ENCODE measurements at regions of chr6 and their contacts with region 1.

Region 1: GRCh38 chr6:130322673-130323268 is 43.0 kb upstream of the TMEM200A start:
- DNase-seq: peak; percentile 60
- H3K4me3 ChIP-seq: no peak overlapping the region
- H3K27ac ChIP-seq: no peak overlapping the region
- H3K4me1 ChIP-seq: peaks cover 2% of the 10 kb centered on the region
- H3K27me3 ChIP-seq: no peaks in the 10 kb centered on the region
- CTCF ChIP-seq: peak; percentile 71 to 83 (median 78)
- POLR2A ChIP-seq: no peak

Region 2: GRCh38 chr6:130240232-130240631 is 82.5 kb before region 1 on chr6:
- intact Hi-C with region 1: no loop called
- DNase-seq: no peak
- H3K4me3 ChIP-seq: no peak overlapping the region
- H3K27ac ChIP-seq: no peak overlapping the region
- H3K4me1 ChIP-seq: no peaks in the 10 kb centered on the region
- H3K27me3 ChIP-seq: no peaks in the 10 kb centered on the region
- CTCF ChIP-seq: no peak
- POLR2A ChIP-seq: no peak

Region 3: GRCh38 chr6:130259557-130259956 is 63.2 kb before region 1 on chr6:
- intact Hi-C with region 1: no loop called
- DNase-seq: no peak
- H3K4me3 ChIP-seq: no peak overlapping the region
- H3K27ac ChIP-seq: no peak overlapping the region
- H3K4me1 ChIP-seq: no peaks in the 10 kb centered on the region
- H3K27me3 ChIP-seq: no peaks in the 10 kb centered on the region
- CTCF ChIP-seq: no peak
- POLR2A ChIP-seq: no peak

Region 4: GRCh38 chr6:130417951-130418350 is 95.2 kb after region 1 on chr6:
- intact Hi-C with region 1: no loop called
- DNase-seq: no peak
- H3K4me3 ChIP-seq: no peak overlapping the region
- H3K27ac ChIP-seq: no peak overlapping the region
- H3K4me1 ChIP-seq: no peaks in the 10 kb centered on the region
- H3K27me3 ChIP-seq: no peaks in the 10 kb centered on the region
- CTCF ChIP-seq: no peak
- POLR2A ChIP-seq: no peak

Region 5: DNA sequence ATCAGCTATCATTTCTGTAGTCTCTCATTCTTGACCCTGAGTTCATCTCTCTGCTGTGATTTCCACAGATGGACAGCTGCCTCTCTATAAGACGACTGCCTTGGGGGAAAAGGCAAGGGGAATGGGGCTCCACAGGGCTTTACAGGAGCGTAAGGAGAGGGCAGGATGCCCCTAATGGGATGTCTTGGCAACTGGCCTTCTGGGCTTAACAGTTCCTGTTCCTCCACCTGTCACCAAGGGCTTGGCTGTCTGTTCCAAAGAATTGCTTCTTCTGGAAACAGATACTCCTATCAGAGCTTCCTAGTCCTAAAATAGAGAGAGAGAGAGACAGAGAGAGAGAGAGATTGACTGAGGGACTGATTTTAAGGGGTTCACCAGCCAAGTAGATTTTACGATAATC is 225.0 kb after region 1 on chr6:
- intact Hi-C with region 1: no loop called
- DNase-seq: no peak
- H3K4me3 ChIP-seq: no peak overlapping the region
- H3K27ac ChIP-seq: no peak overlapping the region
- H3K4me1 ChIP-seq: no peaks in the 10 kb centered on the region
- H3K27me3 ChIP-seq: no peaks in the 10 kb centered on the region
- CTCF ChIP-seq: no peak
- POLR2A ChIP-seq: no peak

Region 6: DNA sequence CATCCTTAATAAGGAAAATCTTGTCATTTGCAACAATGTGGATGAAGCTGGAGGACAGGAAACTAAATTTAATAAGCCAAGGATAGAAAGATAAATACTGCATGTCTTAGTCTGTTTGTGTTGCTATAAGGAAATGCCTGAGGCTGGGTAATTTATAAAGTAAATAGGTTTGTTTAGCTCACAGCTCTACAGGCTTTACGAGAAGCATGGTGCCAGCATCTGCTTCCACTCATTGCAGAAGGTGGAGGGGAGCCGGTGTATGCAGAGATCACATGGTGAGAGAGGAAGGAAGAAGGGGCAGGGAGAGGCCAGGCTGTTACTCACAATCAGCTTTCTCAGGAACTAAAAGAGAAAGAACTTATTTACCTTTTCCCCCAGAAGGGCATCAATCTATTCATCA is 385.6 kb after region 1 on chr6:
- intact Hi-C with region 1: loop called (anchors 10 kb)
- DNase-seq: no peak
- H3K4me3 ChIP-seq: no peak overlapping the region
- H3K27ac ChIP-seq: no peak overlapping the region
- H3K4me1 ChIP-seq: no peaks in the 10 kb centered on the region
- H3K27me3 ChIP-seq: no peaks in the 10 kb centered on the region
- CTCF ChIP-seq: no peak
- POLR2A ChIP-seq: no peak